ENCODE measurements at regions of chr7 and their contacts with region 1.

Region 1: DNA sequence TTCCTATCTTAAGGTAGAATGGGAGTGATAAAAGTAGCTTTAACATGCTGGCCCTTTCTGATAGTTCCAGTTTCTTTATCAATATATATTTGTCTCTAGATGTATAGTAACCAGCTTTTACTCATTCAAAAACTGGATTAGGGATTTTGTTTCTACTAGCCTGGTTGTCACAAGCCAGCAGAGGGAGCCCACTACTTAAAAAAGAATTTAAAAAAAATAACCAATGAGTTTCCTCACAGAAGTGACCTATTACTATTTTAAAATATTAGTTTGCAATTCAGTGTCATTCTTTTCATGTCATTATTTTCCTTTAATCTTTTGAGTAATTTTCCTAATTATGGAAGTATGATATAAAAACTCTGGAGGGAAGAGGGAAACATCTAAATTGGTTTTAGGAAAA is 142.1 kb downstream of the PHTF2 start:
- DNase-seq: peak; percentile 7
- H3K4me3 Mint-ChIP-seq: no peak overlapping the region
- H3K27ac Mint-ChIP-seq: no peak overlapping the region
- H3K4me1 Mint-ChIP-seq: no peaks in the 10 kb centered on the region
- H3K27me3 Mint-ChIP-seq: no peaks in the 10 kb centered on the region
- CTCF ChIP-seq: no peak

Region 2: GRCh38 chr7:77657427-77658224 is 283.0 kb before region 1 on chr7:
- CTCF ChIA-PET with region 1: no interaction called
- intact Hi-C with region 1: loop called (anchors 5 kb)
- DNase-seq: peak; percentile 21
- H3K4me3 Mint-ChIP-seq: no peak overlapping the region
- H3K27ac Mint-ChIP-seq: no peak overlapping the region
- H3K4me1 Mint-ChIP-seq: no peaks in the 10 kb centered on the region
- H3K27me3 Mint-ChIP-seq: no peaks in the 10 kb centered on the region
- CTCF ChIP-seq: peak; percentile 29

Region 3: GRCh38 chr7:78225534-78225933 is 284.9 kb after region 1 on chr7:
- CTCF ChIA-PET with region 1: no interaction called
- intact Hi-C with region 1: loop called (anchors 2 kb)
- DNase-seq: no peak
- H3K4me3 Mint-ChIP-seq: no peak overlapping the region
- H3K27ac Mint-ChIP-seq: no peak overlapping the region
- H3K4me1 Mint-ChIP-seq: no peaks in the 10 kb centered on the region
- H3K27me3 Mint-ChIP-seq: peaks cover 11% of the 10 kb centered on the region
- CTCF ChIP-seq: no peak